Heart left ventricle (tissue), 16 donors: ENCODE measurements at regions of chr5 and their contacts with region 1.

Region 1: GRCh38 chr5:64074533-64074932 is 91.1 kb upstream of the RNF180 start:
- DNase-seq: no peak
- ATAC-seq: no peak
- H3K4me3 ChIP-seq: no peak overlapping the region
- H3K27ac ChIP-seq: no peak overlapping the region
- H3K4me1 ChIP-seq: no peaks in the 10 kb centered on the region
- H3K27me3 ChIP-seq: peaks cover 0 to 3% (median 0%) of the 10 kb centered on the region in 9 donors
- CTCF ChIP-seq: peak; percentile 23 to 68 (median 46)
- POLR2A ChIP-seq: no peak

Region 2: DNA sequence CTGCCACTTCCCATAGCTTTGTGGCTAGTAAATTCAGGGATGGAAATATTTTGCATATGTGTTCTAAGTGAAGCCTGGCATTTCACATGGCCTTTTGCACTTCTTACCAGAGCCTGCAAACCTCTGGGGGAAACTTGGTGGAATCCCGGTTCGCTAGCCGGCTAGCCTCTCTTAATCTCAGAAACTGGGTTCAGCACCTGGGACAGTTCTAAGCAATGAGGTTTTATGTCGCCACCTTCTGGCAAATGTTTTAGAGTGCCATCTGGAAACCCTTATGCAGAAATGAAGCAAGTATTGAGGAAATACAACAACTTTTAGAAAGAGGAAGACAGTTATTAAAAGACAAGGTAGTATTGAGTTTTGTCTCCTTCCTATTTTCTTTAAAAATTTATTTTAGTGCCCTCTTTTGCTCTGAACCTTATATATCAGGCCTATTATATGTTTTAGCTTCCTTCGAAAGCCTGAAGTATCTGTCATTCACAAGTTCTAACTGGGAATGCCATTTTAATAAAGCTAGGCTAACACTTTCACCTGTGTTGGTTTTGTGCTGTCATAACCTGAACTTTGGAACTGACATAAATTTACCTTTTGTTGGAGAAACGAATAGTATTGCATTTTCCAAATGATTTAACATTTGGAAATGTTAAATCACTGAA is 111.3 kb before region 1 on chr5:
- intact Hi-C with region 1: no loop called
- DNase-seq: peak in 1 of 5 donors; percentile 16
- ATAC-seq: peak in 2 of 4 donors; percentile 39 to 43
- H3K4me3 ChIP-seq: no peak overlapping the region
- H3K27ac ChIP-seq: no peak overlapping the region
- H3K4me1 ChIP-seq: no peaks in the 10 kb centered on the region
- H3K27me3 ChIP-seq: peaks cover 18 to 52% (median 45%) of the 10 kb centered on the region in 9 donors
- CTCF ChIP-seq: peak in 11 of 12 donors; percentile 24 to 70 (median 49)
- POLR2A ChIP-seq: no peak

Region 3: GRCh38 chr5:64015824-64016223 is 58.7 kb before region 1 on chr5:
- intact Hi-C with region 1: no loop called
- DNase-seq: no peak
- ATAC-seq: no peak
- H3K4me3 ChIP-seq: no peak overlapping the region
- H3K27ac ChIP-seq: no peak overlapping the region
- H3K4me1 ChIP-seq: no peaks in the 10 kb centered on the region
- H3K27me3 ChIP-seq: no peaks in the 10 kb centered on the region
- CTCF ChIP-seq: no peak
- POLR2A ChIP-seq: no peak

Region 4: GRCh38 chr5:64207978-64208377 is 133.4 kb after region 1 on chr5:
- intact Hi-C with region 1: loop called in 3 of 10 experiments (anchors 5 to 10 kb)
- DNase-seq: no peak
- ATAC-seq: no peak
- H3K4me3 ChIP-seq: no peak overlapping the region
- H3K27ac ChIP-seq: no peak overlapping the region
- H3K4me1 ChIP-seq: peaks cover 0 to 11% (median 0%) of the 10 kb centered on the region in 12 donors
- H3K27me3 ChIP-seq: no peaks in the 10 kb centered on the region
- CTCF ChIP-seq: peak in 11 of 12 donors; percentile 10 to 63 (median 33)
- POLR2A ChIP-seq: no peak

Region 5: DNA sequence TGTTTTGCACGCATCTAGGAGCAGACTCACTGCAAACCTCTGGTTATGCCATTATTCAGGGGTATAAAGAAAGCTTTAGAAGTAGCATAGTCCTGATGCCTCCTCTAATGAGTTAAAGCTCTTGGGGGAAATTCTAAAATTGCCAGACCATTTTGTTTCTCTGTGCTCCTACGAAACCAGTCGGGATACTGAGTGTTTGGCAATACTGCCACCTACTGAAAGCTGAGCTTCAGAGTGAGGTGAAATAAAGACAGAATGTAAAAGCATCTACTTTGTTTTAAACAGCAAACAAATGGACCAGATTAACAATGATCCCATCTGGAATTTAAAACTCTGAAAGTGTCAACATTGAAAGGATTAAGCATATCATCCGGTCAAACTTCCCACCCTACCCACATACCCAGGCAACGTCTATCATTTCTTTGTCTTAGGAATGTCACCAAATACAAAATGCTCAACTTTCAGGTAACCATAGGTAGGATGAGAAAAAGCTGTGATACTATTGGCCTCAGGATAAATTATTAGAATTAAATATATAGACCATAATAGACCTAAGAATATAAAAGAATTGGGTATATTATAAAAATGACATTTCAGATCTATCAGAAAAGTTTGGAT is 537.9 kb after region 1 on chr5:
- intact Hi-C with region 1: loop called in 3 of 10 experiments (anchors 5 to 10 kb)
- DNase-seq: peak in 3 of 5 donors; percentile 28 to 40 (median 32)
- ATAC-seq: peak in 3 of 4 donors; percentile 60 to 68 (median 68)
- H3K4me3 ChIP-seq: no peak overlapping the region
- H3K27ac ChIP-seq: no peak overlapping the region
- H3K4me1 ChIP-seq: peaks cover 0 to 5% (median 0%) of the 10 kb centered on the region in 12 donors
- H3K27me3 ChIP-seq: no peaks in the 10 kb centered on the region
- CTCF ChIP-seq: peak; percentile 43 to 82 (median 73)
- POLR2A ChIP-seq: no peak

Region 6: DNA sequence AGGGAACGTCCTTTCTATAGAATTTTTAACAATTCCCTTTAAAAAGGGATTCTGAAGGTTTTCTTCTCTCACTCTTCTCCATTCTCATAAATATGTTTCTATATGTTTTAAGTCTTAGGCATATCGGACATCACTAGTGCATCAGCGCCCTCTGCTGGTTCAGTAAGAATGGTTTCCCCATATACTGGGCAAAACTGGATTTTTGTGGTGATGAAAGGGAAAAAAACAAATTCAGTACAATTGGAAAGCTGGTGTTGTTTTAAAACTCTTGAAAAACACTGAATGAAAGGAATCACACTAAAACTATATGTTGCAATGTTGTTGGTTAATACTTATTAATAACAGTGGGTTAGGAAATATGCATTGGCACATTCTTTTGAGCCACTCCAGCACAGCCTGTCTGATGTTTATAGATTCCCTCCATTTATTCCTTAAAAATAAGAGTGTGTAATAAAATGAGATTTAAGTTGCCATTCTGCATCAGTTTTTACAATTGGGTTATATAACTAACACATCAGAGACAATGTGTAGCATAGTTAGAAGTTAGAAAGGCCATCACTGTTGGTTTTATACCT is 710.0 kb after region 1 on chr5:
- intact Hi-C with region 1: loop called in 2 of 10 experiments (anchors 5 to 10 kb)
- DNase-seq: peak in 4 of 5 donors; percentile 50 to 73 (median 58)
- ATAC-seq: peak in 2 of 4 donors; percentile 60 to 67
- H3K4me3 ChIP-seq: no peak overlapping the region
- H3K27ac ChIP-seq: no peak overlapping the region
- H3K4me1 ChIP-seq: no peaks in the 10 kb centered on the region
- H3K27me3 ChIP-seq: no peaks in the 10 kb centered on the region
- CTCF ChIP-seq: peak; percentile 70 to 94 (median 86)
- POLR2A ChIP-seq: no peak